ENCODE measurements at regions of chr1 and their contacts with region 1.

Region 1: DNA sequence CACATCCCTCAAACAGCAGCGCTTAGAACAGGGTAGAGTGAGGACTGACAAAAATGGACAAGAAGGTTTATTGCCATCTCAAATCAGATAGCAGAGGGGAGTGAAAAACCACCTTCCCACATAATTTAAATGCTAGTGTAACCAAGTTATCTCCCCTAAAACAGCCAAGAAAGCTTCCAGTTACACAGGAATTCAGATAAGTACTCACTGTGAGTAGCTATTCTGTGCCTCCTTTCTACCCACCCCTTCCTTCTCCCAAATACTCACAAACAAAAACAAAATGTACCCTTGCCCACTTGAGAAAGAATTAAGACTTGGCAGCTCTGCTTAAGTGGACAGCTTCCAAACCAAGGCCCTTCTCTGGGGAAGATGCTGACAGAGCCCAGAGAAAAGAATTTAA is 9.1 kb downstream of the OTUD7B start:
- DNase-seq: no peak
- ATAC-seq: no peak
- H3K4me3 ChIP-seq: no peak overlapping the region
- H3K27ac ChIP-seq: no peak overlapping the region
- H3K4me1 ChIP-seq: peaks cover 13% of the 10 kb centered on the region
- H3K27me3 ChIP-seq: no peaks in the 10 kb centered on the region
- CTCF ChIP-seq: no peak
- POLR2A ChIP-seq: no peak
- RAD21 ChIP-seq: no peak

Region 2: GRCh38 chr1:150021191-150021694 is 19.8 kb after region 1 on chr1:
- CTCF ChIA-PET with region 1: no interaction called
- POLR2A ChIA-PET with region 1: no interaction called
- dilution Hi-C with region 1: no loop called
- in situ Hi-C with region 1: no loop called
- intact Hi-C with region 1: loop called (anchors 1 kb)
- DNase-seq: no peak
- ATAC-seq: no peak
- H3K4me3 ChIP-seq: no peak overlapping the region
- H3K27ac ChIP-seq: no peak overlapping the region
- H3K4me1 ChIP-seq: no peaks in the 10 kb centered on the region
- H3K27me3 ChIP-seq: no peaks in the 10 kb centered on the region
- CTCF ChIP-seq: no peak
- POLR2A ChIP-seq: no peak
- RAD21 ChIP-seq: no peak

Region 3: GRCh38 chr1:150176593-150176992 is 175.2 kb after region 1 on chr1:
- CTCF ChIA-PET with region 1: no interaction called
- POLR2A ChIA-PET with region 1: no interaction called
- dilution Hi-C with region 1: no loop called
- in situ Hi-C with region 1: no loop called
- intact Hi-C with region 1: no loop called
- DNase-seq: no peak
- ATAC-seq: no peak
- H3K4me3 ChIP-seq: no peak overlapping the region
- H3K27ac ChIP-seq: no peak overlapping the region
- H3K4me1 ChIP-seq: peaks cover 4% of the 10 kb centered on the region
- H3K27me3 ChIP-seq: no peaks in the 10 kb centered on the region
- CTCF ChIP-seq: no peak
- POLR2A ChIP-seq: no peak
- RAD21 ChIP-seq: no peak

Measured in IMR-90 (cell line).